ENCODE measurements at regions of chr14 and their contacts with region 1.

Region 1: GRCh38 chr14:104826189-104826860 is 25.4 kb downstream of the ZBTB42 start:
- DNase-seq: peak; percentile 99
- H3K4me3 Mint-ChIP-seq: peak overlapping the region; percentile 90
- H3K27ac Mint-ChIP-seq: no peak overlapping the region
- H3K4me1 Mint-ChIP-seq: peaks cover 11% of the 10 kb centered on the region
- H3K27me3 Mint-ChIP-seq: peaks cover 32% of the 10 kb centered on the region

Region 2: GRCh38 chr14:104723648-104724406 is 102.5 kb before region 1 on chr14 and contains the start of gene ADSS1:
- intact Hi-C with region 1: loop called (anchors 1 kb)
- DNase-seq: peak; percentile 91
- H3K4me3 Mint-ChIP-seq: peak within 1 kb of the TSS; percentile 72
- H3K27ac Mint-ChIP-seq: no peak within 1 kb of the TSS
- H3K4me1 Mint-ChIP-seq: peaks cover 2% of the 10 kb centered on the region
- H3K27me3 Mint-ChIP-seq: peaks cover 2% of the 10 kb centered on the region
- total RNA-seq, gene ADSS1: 0.96 and 1.4 TPM in 2 replicates

Region 3: DNA sequence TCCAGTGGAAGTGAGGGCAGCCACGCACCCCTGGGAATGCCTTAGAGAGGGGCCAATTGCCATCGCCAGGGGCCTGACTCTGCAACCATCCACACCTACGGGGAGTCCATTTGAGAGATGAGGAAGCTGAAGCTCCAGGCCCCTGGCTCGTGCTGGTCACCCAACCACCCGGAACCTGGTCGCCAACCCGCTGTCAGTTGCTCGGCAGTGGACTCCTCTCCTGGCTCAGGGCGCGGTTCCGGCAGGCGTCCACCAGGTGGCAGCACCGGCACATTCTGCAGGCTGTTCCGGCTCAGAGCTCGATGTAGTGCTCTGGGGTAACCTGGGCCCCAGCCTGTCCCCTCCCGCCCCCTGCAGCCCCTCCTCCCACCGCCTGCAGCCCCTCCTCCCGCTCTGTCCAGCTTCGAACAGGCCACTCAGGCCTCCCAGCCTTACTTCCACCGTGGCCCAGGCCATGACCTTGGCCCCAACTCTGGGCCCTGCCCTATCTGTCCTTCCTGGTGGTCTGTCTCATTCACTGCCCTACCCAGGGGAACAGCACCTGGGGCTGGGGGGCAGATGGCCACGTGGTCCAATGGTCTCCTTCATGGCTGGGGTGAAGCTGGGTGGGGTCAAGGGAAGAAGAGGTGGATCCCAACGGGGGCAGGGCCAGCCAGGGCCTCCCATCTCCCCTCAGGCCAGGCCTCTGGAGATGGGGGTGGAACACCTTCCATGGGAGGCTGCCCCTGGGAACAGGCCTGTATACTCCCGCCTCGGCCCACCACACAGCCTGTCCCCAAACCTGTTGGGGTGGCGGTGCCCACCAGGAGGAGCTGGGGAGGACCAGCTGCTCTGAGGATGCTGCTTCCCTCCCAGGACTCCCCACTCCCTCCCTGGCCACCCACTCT is 57.6 kb before region 1 on chr14:
- intact Hi-C with region 1: loop called (anchors 1 kb)
- DNase-seq: peak; percentile 98
- H3K4me3 Mint-ChIP-seq: no peak overlapping the region
- H3K27ac Mint-ChIP-seq: no peak overlapping the region
- H3K4me1 Mint-ChIP-seq: peaks cover 3% of the 10 kb centered on the region
- H3K27me3 Mint-ChIP-seq: no peaks in the 10 kb centered on the region

Region 4: GRCh38 chr14:104800015-104800770 is 26.1 kb before region 1 on chr14:
- intact Hi-C with region 1: loop called (anchors 2 kb)
- DNase-seq: peak; percentile 95
- H3K4me3 Mint-ChIP-seq: peak overlapping the region; percentile 21
- H3K27ac Mint-ChIP-seq: peak overlapping the region; percentile 78
- H3K4me1 Mint-ChIP-seq: peaks cover 20% of the 10 kb centered on the region
- H3K27me3 Mint-ChIP-seq: peaks cover 1% of the 10 kb centered on the region

Region 5: DNA sequence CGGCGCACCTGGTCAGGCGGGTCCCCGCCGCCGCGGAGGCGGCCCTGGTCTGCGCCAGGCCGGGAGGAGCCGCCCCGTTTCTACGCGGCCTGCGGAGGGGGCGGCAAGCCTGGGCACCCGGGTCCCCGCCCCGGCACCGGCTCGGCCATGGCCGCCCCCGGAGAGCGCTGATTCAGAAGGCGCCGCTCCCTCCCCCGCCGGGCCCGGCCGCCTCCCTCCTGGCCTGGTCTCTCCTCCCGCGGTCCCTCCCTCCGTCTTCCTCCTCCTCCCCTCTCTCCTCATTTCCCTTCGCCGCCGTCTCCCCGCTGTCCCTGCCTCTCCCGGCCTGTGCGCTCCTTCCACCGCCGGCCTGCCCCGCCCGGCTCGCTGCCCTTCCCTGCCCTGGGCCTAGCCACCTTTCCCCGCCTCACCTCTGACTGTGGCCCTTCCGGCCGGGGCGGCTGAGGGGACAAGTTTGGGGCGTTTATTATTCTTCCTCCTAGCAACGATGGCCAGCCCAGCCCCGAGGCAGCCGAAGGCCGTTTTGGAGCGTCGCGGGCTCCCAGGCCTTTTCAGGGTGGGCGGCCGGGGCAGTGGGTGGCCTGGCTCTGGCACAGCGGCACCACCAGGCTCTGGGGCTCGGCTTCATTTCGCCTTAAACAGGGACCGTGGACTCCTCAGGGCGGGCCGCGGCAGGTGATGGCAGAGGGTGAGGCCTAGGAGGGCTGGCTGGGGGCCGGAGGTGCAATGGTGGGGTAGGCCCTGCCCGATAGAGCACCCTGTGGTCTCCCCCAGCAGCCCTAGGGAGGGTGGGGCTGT is 39.5 kb after region 1 on chr14:
- intact Hi-C with region 1: loop called (anchors 2 kb)
- DNase-seq: peak; percentile 82
- H3K4me3 Mint-ChIP-seq: peak overlapping the region; percentile 75
- H3K27ac Mint-ChIP-seq: no peak overlapping the region
- H3K4me1 Mint-ChIP-seq: no peaks in the 10 kb centered on the region
- H3K27me3 Mint-ChIP-seq: peaks cover 11% of the 10 kb centered on the region